Posterior vena cava (tissue), 2 donors: ENCODE measurements at regions of chr11 and their contacts with region 1.

Region 1: GRCh38 chr11:64652586-64653387 is 61.8 kb downstream of the SLC22A12 start:
- DNase-seq: peak; percentile 91

Region 2: DNA sequence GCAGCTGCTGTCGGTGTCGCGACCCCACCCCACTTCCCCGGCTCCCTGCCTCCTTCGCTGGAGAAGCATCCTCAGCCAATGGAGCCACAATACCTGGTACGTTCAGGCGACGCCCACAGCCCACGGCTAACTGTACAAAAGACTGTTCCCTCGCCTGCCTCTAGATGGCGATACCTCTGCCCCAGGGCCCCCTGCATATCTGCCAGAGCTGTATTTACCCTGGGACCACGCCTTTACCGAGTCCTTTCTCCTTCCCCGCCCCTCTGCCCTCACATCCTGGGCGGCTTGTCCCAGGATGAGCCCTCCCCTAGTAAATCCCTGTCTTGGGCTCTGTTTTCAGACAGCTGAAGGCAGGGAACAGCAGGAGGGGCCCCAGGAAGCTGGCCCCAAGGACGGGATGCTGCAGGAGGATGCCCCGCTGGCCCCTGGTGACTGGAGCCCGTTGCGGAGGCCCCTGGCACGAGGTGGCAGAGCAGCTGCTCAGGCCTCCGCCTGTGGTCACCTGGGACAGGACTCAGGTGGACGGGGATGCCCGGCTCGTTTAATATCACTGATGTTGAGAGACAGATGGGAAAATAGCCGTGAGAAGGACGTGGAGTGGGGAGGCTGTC is 203.1 kb before region 1 on chr11:
- intact Hi-C with region 1: loop called (anchors 5 to 10 kb)
- DNase-seq: peak; percentile 83

Region 3: GRCh38 chr11:64489831-64490441 is 162.9 kb before region 1 on chr11:
- intact Hi-C with region 1: loop called in 1 of 2 experiments (anchors 10 kb)
- DNase-seq: peak; percentile 88

Region 4: DNA sequence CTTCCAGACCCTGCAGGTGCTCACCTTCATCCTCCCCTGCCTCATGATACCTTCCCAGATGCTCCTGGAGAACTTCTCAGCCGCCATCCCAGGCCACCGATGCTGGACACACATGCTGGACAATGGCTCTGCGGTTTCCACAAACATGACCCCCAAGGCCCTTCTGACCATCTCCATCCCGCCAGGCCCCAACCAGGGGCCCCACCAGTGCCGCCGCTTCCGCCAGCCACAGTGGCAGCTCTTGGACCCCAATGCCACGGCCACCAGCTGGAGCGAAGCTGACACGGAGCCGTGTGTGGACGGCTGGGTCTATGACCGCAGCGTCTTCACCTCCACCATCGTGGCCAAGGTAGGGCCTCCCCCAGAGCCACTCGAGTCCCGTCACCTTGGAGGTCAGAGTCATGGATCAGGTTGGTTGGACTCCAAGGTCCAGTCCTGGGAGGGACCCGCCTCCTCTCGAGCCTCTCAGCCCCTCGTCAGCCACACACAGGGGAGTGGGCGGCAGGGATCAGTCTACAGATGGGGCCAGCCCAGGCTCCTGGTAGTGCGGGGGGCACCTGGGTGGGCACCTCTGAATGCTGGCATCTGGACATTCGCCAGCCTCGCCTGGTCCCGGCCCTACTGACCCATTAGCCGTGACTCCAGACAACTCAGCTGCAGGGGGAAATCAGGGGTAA is 96.6 kb before region 1 on chr11:
- intact Hi-C with region 1: loop called in 1 of 2 experiments (anchors 2 kb)
- DNase-seq: peak; percentile 75